Activated CD4-positive, alpha-beta memory T cell treated with anti-CD3 and anti-CD28 coated beads, Interleukin-2, amount 10 ng/mL, durations not matched to agents 7 days and 5 days (primary cell): ENCODE measurements at regions of chr3 and their contacts with region 1.

Region 1: GRCh38 chr3:194486540-194487288 is at the start of gene ATP13A3:
- DNase-seq: peak; percentile 91
- H3K4me3 Mint-ChIP-seq: peak within 1 kb of the TSS; percentile 91
- H3K27ac Mint-ChIP-seq: peak within 1 kb of the TSS; percentile 91
- H3K4me1 Mint-ChIP-seq: peaks cover 64% of the 10 kb centered on the region
- H3K27me3 Mint-ChIP-seq: no peaks in the 10 kb centered on the region
- total RNA-seq, gene ATP13A3: 76.8 to 77.8 TPM

Region 2: GRCh38 chr3:194583604-194584318 is 97.0 kb after region 1 on chr3:
- CTCF ChIA-PET with region 1: interaction called, 5 read pairs
- POLR2A ChIA-PET with region 1: interaction called, 84 read pairs
- DNase-seq: peak; percentile 95
- H3K4me3 Mint-ChIP-seq: peak overlapping the region; percentile 97
- H3K27ac Mint-ChIP-seq: peak overlapping the region; percentile 93
- H3K4me1 Mint-ChIP-seq: peaks cover 31% of the 10 kb centered on the region
- H3K27me3 Mint-ChIP-seq: no peaks in the 10 kb centered on the region

Region 3: DNA sequence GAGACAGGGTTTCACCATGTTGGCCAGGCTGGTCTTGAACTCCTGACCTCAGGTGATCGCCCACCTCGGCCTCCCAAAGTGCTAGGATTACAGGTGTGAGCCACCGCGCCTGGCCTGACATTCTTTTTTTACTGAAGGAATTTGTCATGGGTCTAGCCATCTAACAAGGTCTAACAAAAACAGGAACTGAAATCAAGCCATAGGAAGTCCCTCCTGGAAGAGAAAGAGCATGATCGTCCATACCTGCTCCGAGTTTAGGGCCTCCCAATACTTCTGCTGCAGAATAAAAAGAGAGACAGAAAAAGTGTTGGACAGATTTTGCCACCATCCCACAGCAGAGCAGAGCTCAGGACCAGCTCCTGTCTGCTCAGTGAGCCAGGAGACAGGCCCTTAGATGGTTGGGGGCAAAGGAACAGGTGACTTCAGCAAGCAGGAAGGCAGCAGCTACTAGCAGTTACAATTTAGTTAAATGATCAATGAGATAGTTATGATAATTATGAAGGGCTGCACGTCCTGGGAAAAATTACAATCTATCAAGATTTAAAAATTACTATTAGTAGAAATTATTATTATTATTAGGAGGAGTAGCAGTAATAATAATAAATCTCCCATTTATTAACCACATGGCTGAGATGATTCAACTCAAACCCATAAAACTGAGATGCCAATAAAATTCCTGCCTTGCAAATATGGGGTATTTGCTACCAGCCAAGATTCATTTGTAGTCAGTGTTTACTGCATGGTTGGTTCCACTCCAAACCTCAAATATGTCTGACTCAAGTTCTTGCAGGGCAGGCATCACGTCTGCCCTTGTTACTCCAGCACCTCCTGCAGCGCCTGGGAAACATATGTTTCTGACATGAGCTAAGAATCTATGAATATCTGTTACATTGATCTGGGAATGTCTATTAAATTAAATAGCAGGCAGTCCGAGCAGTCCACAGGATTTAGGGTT is 106.4 kb after region 1 on chr3:
- CTCF ChIA-PET with region 1: interaction called, 12 read pairs
- POLR2A ChIA-PET with region 1: interaction called, 84 read pairs
- DNase-seq: no peak
- H3K4me3 Mint-ChIP-seq: no peak overlapping the region
- H3K27ac Mint-ChIP-seq: no peak overlapping the region
- H3K4me1 Mint-ChIP-seq: peaks cover 6% of the 10 kb centered on the region
- H3K27me3 Mint-ChIP-seq: no peaks in the 10 kb centered on the region